A673 (cell line): ENCODE measurements at regions of chr6 and their contacts with region 1.

Region 1: GRCh38 chr6:38702558-38703397 is at the start of gene GLO1:
- DNase-seq: peak; percentile 99
- H3K4me3 ChIP-seq: peak within 1 kb of the TSS; percentile 63
- H3K27ac ChIP-seq: peak within 1 kb of the TSS; percentile 81
- H3K4me1 ChIP-seq: no peaks in the 10 kb centered on the region
- H3K27me3 ChIP-seq: no peaks in the 10 kb centered on the region
- CTCF ChIP-seq: no peak
- total RNA-seq, gene GLO1: 183 and 188 TPM in 2 replicates

Region 2: GRCh38 chr6:37615564-37616340 is 1087.0 kb before region 1 on chr6:
- CTCF ChIA-PET with region 1: no interaction called
- POLR2A ChIA-PET with region 1: interaction called, 14 read pairs
- intact Hi-C with region 1: no loop called
- DNase-seq: peak; percentile 77
- H3K4me3 ChIP-seq: no peak overlapping the region
- H3K27ac ChIP-seq: no peak overlapping the region
- H3K4me1 ChIP-seq: peaks cover 48% of the 10 kb centered on the region
- H3K27me3 ChIP-seq: no peaks in the 10 kb centered on the region
- CTCF ChIP-seq: no peak

Region 3: GRCh38 chr6:38436726-38437451 is 265.9 kb before region 1 on chr6:
- CTCF ChIA-PET with region 1: no interaction called
- POLR2A ChIA-PET with region 1: interaction called, 11 read pairs
- intact Hi-C with region 1: no loop called
- DNase-seq: peak; percentile 6
- H3K4me3 ChIP-seq: no peak overlapping the region
- H3K27ac ChIP-seq: no peak overlapping the region
- H3K4me1 ChIP-seq: no peaks in the 10 kb centered on the region
- H3K27me3 ChIP-seq: no peaks in the 10 kb centered on the region
- CTCF ChIP-seq: no peak

Region 4: GRCh38 chr6:38570750-38571149 is 132.0 kb before region 1 on chr6:
- CTCF ChIA-PET with region 1: no interaction called
- POLR2A ChIA-PET with region 1: no interaction called
- intact Hi-C with region 1: no loop called
- DNase-seq: peak; percentile 11
- H3K4me3 ChIP-seq: no peak overlapping the region
- H3K27ac ChIP-seq: no peak overlapping the region
- H3K4me1 ChIP-seq: peaks cover 8% of the 10 kb centered on the region
- H3K27me3 ChIP-seq: no peaks in the 10 kb centered on the region
- CTCF ChIP-seq: peak; percentile 57; the same call in 1 of the 2 replicates

Region 5: GRCh38 chr6:38725414-38726183 is 22.8 kb after region 1 on chr6:
- CTCF ChIA-PET with region 1: no interaction called
- POLR2A ChIA-PET with region 1: interaction called, 12 read pairs
- intact Hi-C with region 1: no loop called
- DNase-seq: no peak
- H3K4me3 ChIP-seq: no peak overlapping the region
- H3K27ac ChIP-seq: no peak overlapping the region
- H3K4me1 ChIP-seq: peaks cover 7% of the 10 kb centered on the region
- H3K27me3 ChIP-seq: no peaks in the 10 kb centered on the region
- CTCF ChIP-seq: no peak

Region 6: DNA sequence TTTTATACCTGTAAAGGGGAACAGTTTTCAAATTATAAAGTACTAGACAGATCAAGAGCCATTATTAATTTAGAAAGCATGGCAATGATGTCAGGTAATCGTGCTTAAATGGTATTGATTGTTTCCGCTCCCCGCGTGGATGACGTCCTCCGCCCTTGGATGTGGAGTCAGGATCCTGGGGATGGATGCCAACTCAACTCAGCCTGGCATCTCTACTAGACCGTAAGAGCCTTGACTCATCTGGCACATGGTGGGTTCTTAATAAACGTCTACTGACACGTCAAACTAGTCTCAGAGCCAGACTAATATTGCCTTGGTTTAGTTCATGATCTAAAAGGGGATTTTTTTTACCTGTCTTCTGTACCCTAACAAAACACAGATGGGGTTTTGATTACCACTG is 1804.2 kb after region 1 on chr6:
- CTCF ChIA-PET with region 1: no interaction called
- POLR2A ChIA-PET with region 1: no interaction called
- intact Hi-C with region 1: no loop called
- DNase-seq: no peak
- H3K4me3 ChIP-seq: no peak overlapping the region
- H3K27ac ChIP-seq: no peak overlapping the region
- H3K4me1 ChIP-seq: no peaks in the 10 kb centered on the region
- H3K27me3 ChIP-seq: no peaks in the 10 kb centered on the region
- CTCF ChIP-seq: no peak